ENCODE measurements at regions of chr17 and their contacts with region 1.

Region 1: DNA sequence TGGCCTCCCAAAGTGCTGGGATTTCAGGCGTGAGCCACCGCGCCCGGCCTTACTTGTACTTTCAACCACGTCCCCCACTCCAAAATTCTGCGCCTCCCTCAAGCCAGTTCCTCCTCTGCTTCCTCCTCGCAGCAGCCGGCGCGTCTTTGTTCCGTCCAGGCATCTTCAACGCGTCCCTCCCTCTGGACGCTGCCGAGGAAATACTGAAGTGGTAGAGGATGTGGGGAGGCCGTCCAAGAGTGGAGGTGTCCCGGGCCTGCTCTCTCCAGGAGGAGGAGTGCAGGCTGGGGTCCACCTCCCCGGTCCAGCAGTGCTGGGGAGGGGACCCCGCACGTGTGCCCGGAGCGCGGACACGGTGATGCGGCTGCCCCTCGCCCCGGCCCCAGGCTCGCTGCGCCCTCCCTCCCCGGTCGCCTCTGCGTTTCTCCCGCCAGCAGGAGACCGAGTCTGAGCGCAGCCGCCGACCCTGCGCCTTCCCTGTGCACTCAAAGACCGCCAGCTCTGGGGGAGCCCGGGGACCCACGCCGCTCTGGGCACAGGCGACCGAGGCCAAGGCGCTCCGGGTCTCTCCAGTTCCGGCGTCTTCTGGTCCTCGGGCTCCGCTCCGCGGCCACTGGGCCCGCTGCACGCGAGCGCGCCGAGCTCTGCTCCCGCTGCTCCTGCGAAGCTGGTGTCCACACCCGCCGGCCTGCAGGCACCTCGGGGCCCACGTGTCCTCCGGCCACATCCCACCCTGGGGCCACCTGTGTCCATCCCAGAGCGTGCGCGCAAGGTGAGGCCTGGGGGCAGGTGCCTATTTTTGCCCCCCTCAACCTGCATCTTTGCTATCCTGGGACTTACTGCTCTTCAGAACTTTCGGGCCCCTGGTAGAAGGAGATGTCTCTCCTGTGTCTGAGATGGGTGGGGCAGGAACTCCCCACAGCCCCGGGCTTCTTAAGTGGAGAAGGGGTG is 31.7 kb downstream of the OSBPL7 start:
- DNase-seq: peak; percentile 96
- H3K4me3 ChIP-seq: peak overlapping the region; percentile 43 to 48
- H3K27ac ChIP-seq: 0 out of 4 replicates have a peak overlapping the region, but pooled peaks of 1 of the 2 experiments have one; percentile 2
- H3K4me1 ChIP-seq: peaks cover 0 to 5% of the 10 kb centered on the region in 2 experiments; a peak in 1 of 4 replicates
- H3K27me3 ChIP-seq: peaks cover 73% of the 10 kb centered on the region
- CTCF ChIP-seq: peak; percentile 62
- EP300 ChIP-seq: no peak
- RAD21 ChIP-seq: peak; percentile 81

Region 2: GRCh38 chr17:47675380-47676198 is 114.3 kb before region 1 on chr17:
- CTCF ChIA-PET with region 1: interaction called, 11 read pairs
- POLR2A ChIA-PET with region 1: no interaction called
- DNase-seq: no peak
- H3K4me3 ChIP-seq: no peak overlapping the region
- H3K27ac ChIP-seq: no peak overlapping the region
- H3K4me1 ChIP-seq: no peaks in the 10 kb centered on the region
- H3K27me3 ChIP-seq: no peaks in the 10 kb centered on the region
- CTCF ChIP-seq: no peak
- EP300 ChIP-seq: no peak
- RAD21 ChIP-seq: no peak

Region 3: DNA sequence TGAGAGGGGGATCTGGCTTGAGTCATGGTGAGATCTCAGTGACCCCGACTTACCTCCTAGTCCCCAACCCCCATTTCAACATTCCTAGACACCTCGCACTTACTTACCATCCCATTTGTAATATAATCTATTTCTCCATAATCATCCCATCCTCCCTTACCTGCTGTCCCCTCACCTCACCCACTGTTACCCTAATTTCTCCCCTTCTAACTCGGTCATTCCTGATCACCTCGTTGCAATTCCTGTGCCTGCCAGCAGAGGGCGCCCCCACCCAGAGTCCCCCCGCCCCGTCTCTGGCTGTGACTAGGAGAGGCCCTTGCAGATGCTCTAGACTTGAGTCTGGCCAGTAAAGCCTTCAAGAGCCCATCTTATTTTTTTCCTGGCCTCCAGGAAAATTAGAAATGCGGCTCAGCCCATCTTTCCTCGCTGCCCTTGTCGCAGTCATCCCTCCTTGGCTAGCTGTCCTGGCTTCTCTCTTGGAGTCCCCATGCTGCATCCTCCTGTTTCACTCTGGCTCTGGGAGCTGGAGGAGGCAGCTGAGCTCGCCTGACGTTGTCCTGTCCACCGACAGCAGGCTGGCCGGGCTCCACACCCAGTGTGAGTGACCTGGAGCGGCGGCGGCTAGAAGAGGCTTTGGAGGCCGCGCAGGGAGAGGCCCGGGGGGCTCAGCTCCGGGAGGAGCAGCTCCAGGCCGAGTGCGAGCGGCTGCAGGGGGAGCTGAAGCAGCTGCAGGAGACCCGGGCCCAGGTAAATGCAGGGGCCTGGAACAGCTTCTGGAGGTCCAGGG is 90.9 kb before region 1 on chr17:
- CTCF ChIA-PET with region 1: interaction called, 36 read pairs
- POLR2A ChIA-PET with region 1: no interaction called
- DNase-seq: peak; percentile 98
- H3K4me3 ChIP-seq: no peak overlapping the region; a peak in 1 of 4 replicates
- H3K27ac ChIP-seq: no peak overlapping the region
- H3K4me1 ChIP-seq: peaks cover 5 to 10% of the 10 kb centered on the region in 2 experiments; a peak in 1 of 4 replicates
- H3K27me3 ChIP-seq: no peaks in the 10 kb centered on the region
- CTCF ChIP-seq: peak; percentile 100
- EP300 ChIP-seq: no peak
- RAD21 ChIP-seq: peak; percentile 78

Region 4: DNA sequence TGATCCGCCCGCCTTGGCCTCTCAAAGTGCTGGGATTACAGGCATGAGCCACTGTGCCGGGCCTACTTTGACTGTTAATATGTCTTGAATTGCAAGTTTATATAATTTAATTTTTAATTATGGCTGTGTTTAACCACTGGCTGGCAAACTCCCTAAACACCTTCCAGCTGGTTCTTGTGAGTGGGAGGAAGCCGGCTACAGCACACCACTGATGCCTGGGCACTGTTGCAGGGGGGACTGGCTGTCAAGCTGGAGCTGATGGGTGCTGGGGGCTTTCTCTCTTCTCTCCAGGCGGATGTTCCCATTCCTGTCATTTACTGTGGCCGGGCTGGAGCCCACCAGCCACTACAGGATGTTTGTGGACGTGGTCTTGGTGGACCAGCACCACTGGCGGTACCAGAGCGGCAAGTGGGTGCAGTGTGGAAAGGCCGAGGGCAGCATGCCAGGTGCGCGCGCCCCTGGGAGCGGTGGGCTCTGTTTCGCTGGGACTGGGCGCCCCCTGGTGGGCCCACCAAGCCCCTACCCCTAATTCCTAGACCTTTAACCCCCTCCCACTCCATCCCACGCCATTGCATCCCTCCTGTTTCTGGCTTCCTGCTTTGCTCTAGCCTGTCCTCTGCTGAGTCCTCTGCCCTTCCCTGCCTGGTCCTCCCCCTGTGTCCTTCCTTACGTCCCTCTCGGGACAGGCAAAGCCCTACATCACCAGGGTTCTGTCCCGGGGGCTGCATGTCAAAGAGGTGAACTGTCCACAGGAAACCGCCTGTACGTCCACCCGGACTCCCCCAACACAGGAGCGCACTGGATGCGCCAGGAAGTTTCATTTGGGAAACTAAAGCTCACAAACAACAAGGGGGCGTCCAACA is 47.3 kb before region 1 on chr17:
- CTCF ChIA-PET with region 1: interaction called, 12 read pairs
- POLR2A ChIA-PET with region 1: no interaction called
- DNase-seq: peak; percentile 95
- H3K4me3 ChIP-seq: no peak overlapping the region; a peak in 1 of 4 replicates
- H3K27ac ChIP-seq: no peak overlapping the region
- H3K4me1 ChIP-seq: peaks cover 0 to 6% of the 10 kb centered on the region in 2 experiments; a peak in 1 of 4 replicates
- H3K27me3 ChIP-seq: peaks cover 86% of the 10 kb centered on the region
- CTCF ChIP-seq: peak; percentile 61
- EP300 ChIP-seq: no peak
- RAD21 ChIP-seq: peak; percentile 88

Region 5: GRCh38 chr17:47776330-47777197 is 13.3 kb before region 1 on chr17:
- CTCF ChIA-PET with region 1: interaction called, 15 read pairs
- POLR2A ChIA-PET with region 1: no interaction called
- DNase-seq: peak; percentile 81
- H3K4me3 ChIP-seq: no peak overlapping the region; a peak in 1 of 4 replicates
- H3K27ac ChIP-seq: no peak overlapping the region
- H3K4me1 ChIP-seq: peaks cover 0 to 4% of the 10 kb centered on the region in 2 experiments; a peak in 1 of 4 replicates
- H3K27me3 ChIP-seq: peaks cover 73% of the 10 kb centered on the region
- CTCF ChIP-seq: peak; percentile 78
- EP300 ChIP-seq: no peak
- RAD21 ChIP-seq: peak; percentile 76

Region 6: GRCh38 chr17:47821424-47822391 is 31.8 kb after region 1 on chr17 and contains the start of gene OSBPL7:
- CTCF ChIA-PET with region 1: interaction called, 11 read pairs
- POLR2A ChIA-PET with region 1: no interaction called
- DNase-seq: peak; percentile 99
- H3K4me3 ChIP-seq: peak within 1 kb of the TSS; percentile 90 to 93
- H3K27ac ChIP-seq: peak within 1 kb of the TSS; percentile 37 to 88
- H3K4me1 ChIP-seq: peaks cover 11 to 26% of the 10 kb centered on the region in 2 experiments; a peak in 3 of 4 replicates
- H3K27me3 ChIP-seq: no peaks in the 10 kb centered on the region
- CTCF ChIP-seq: peak; percentile 57
- EP300 ChIP-seq: no peak
- RAD21 ChIP-seq: peak; percentile 15; the same call in 1 of the 2 replicates
- polyA plus RNA-seq, gene OSBPL7: 23.7 and 24.7 TPM in 2 replicates

Region 7: GRCh38 chr17:47872021-47872650 is 82.2 kb after region 1 on chr17:
- CTCF ChIA-PET with region 1: no interaction called
- POLR2A ChIA-PET with region 1: no interaction called
- DNase-seq: no peak
- H3K4me3 ChIP-seq: no peak overlapping the region
- H3K27ac ChIP-seq: no peak overlapping the region
- H3K4me1 ChIP-seq: no peaks in the 10 kb centered on the region
- H3K27me3 ChIP-seq: peaks cover 61% of the 10 kb centered on the region
- CTCF ChIP-seq: no peak
- EP300 ChIP-seq: no peak
- RAD21 ChIP-seq: no peak